Lower leg skin (tissue), 4 donors: ENCODE measurements at regions of chr10 and their contacts with region 1.

Region 1: DNA sequence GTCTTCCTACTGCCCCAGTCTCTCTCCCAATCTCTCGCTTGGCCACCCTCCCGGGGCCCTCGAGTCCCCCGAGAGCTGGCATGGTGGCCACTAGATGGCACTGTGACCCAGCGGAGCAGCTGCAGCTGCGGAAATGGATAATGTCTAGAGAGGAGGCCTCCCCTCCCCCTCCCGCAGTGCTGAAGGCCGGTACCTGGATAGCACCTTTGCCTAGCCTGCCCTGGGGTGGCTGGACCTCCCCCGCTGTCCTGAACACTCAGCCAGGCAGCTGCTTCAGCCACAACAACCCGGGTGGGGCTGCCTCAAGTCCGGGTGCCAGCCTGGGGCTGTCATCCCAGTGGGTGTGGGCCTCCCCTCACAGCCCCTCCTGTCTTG is 65.2 kb downstream of the GOLGA7B start:
- DNase-seq: peak; percentile 43 to 93
- H3K4me3 ChIP-seq: no peak overlapping the region
- CTCF ChIP-seq: peak in 1 of 3 donors; percentile 28
- POLR2A ChIP-seq: no peak

Region 2: DNA sequence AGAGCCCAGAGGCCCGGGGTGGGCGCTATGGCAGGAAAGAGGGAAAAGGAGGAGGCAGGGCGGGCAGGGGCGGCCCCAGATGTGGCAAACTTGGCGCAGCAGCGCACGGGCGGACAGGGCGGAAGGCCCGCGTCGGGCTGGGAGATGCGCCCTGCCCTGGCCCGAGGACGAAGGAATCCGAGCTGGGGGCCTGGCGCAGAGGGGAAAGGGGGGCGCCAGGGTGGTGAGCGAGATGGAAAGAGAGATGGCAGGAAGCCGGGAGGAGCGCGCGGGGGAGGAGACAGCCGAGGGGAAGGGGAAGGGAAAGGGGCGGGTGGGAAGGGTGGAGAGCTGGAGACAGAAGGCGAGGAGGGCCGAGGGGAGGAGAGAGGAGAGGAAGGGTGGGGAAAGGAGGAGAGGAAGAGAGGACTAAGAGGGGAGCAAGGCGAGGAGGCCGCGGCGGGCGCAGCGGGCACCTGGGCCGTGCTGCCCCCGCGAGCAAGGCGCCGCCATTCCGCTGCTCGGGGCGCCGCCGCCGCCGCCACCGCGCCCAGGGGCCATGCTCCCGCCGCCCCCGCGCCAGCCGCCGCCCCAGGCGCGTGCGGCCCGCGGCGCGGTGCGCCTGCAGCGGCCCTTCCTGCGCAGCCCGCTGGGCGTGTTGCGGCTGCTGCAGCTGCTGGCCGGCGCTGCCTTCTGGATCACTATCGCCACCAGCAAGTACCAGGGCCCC is 201.3 kb before region 1 on chr10 and contains the start of gene MARVELD1:
- intact Hi-C with region 1: no loop called
- DNase-seq: peak; percentile 71 to 96
- H3K4me3 ChIP-seq: peak within 1 kb of the TSS; percentile 35
- CTCF ChIP-seq: no peak
- POLR2A ChIP-seq: no peak
- total RNA-seq, gene MARVELD1: 22.5 to 50.2 (median 30.3) TPM

Region 3: DNA sequence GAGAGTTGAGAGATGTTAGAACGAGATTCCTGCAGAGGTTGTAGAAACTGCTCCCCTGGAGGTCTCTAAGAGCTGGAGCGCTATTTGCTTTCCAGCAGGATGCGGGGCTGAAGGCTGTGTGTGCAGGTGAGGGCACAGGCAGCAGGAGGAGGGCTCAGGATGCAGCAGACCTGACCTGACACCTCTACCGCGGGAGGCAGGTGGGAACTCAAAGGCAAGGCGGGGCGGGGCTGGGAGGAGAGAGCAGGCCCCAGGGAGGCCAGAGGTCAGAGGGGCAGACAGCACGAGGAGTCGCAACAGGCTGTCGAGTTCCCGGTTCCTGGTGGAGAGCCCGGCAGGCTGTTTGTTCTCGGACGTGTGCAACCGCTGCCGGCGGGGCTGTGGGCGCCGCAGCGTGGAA is 123.5 kb after region 1 on chr10:
- intact Hi-C with region 1: loop called (anchors 5 kb)
- DNase-seq: no peak
- H3K4me3 ChIP-seq: no peak overlapping the region
- CTCF ChIP-seq: no peak
- POLR2A ChIP-seq: no peak

Region 4: GRCh38 chr10:98309366-98310355 is 394.8 kb after region 1 on chr10:
- intact Hi-C with region 1: loop called (anchors 10 kb)
- DNase-seq: peak; percentile 66 to 95
- H3K4me3 ChIP-seq: no peak overlapping the region
- CTCF ChIP-seq: peak in 1 of 3 donors; percentile 69
- POLR2A ChIP-seq: no peak